Gastrocnemius medialis (tissue), 4 donors: ENCODE measurements at regions of chr3 and their contacts with region 1.

Region 1: DNA sequence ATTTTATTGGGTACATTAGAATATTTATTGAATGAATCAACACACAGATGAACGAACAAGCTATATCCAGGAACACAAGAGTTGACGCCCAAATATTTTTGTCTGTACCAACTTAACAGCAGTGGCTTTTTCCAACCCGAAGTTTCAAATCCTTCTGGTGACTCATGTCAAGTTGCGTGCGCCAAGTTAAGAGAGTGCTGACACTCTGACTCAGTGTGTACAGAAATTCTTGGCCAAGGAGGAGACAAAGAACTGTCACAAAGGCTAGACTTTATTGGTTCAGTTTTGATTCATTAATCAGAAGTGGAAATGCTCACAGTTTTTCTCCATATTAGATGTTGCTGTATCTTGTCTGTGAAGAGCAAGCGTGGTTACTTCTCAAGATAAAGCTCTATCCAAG is 59.6 kb upstream of the TSC22D2 start:
- DNase-seq: no peak
- ATAC-seq: peak; percentile 99 to 100
- H3K4me3 ChIP-seq: no peak overlapping the region
- H3K27ac ChIP-seq: peak overlapping the region in 3 of 4 donors; percentile 20 to 70 (median 44)
- H3K4me1 ChIP-seq: peaks cover 15 to 22% of the 10 kb centered on the region in 2 donors
- H3K27me3 ChIP-seq: peaks cover 0 to 4% (median 0%) of the 10 kb centered on the region in 3 donors
- CTCF ChIP-seq: no peak
- POLR2A ChIP-seq: no peak

Region 2: GRCh38 chr3:150227839-150228238 is 120.7 kb before region 1 on chr3:
- in situ Hi-C with region 1: no loop called
- intact Hi-C with region 1: no loop called
- DNase-seq: no peak
- ATAC-seq: peak in 1 of 2 donors; percentile 69
- H3K4me3 ChIP-seq: no peak overlapping the region
- H3K27ac ChIP-seq: no peak overlapping the region
- H3K4me1 ChIP-seq: peaks cover 0 to 4% of the 10 kb centered on the region in 2 donors
- H3K27me3 ChIP-seq: no peaks in the 10 kb centered on the region
- CTCF ChIP-seq: peak; percentile 49 to 72 (median 61)
- POLR2A ChIP-seq: no peak

Region 3: GRCh38 chr3:150238998-150239619 is 109.4 kb before region 1 on chr3:
- in situ Hi-C with region 1: no loop called
- intact Hi-C with region 1: loop called (anchors 5 kb)
- DNase-seq: no peak
- ATAC-seq: no peak
- H3K4me3 ChIP-seq: no peak overlapping the region
- H3K27ac ChIP-seq: no peak overlapping the region
- H3K4me1 ChIP-seq: peaks cover 12 to 32% of the 10 kb centered on the region in 2 donors
- H3K27me3 ChIP-seq: no peaks in the 10 kb centered on the region
- CTCF ChIP-seq: no peak
- POLR2A ChIP-seq: no peak

Region 4: GRCh38 chr3:150253622-150254021 is 94.9 kb before region 1 on chr3:
- in situ Hi-C with region 1: no loop called
- intact Hi-C with region 1: loop called (anchors 5 kb)
- DNase-seq: peak; percentile 24 to 66
- ATAC-seq: peak; percentile 45 to 46
- H3K4me3 ChIP-seq: no peak overlapping the region
- H3K27ac ChIP-seq: peak overlapping the region in 3 of 4 donors; percentile 78 to 89 (median 87)
- H3K4me1 ChIP-seq: peaks cover 21 to 52% of the 10 kb centered on the region in 2 donors
- H3K27me3 ChIP-seq: no peaks in the 10 kb centered on the region
- CTCF ChIP-seq: no peak
- POLR2A ChIP-seq: no peak

Region 5: GRCh38 chr3:150286390-150287147 is 61.9 kb before region 1 on chr3:
- in situ Hi-C with region 1: no loop called
- intact Hi-C with region 1: loop called (anchors 10 kb)
- DNase-seq: no peak
- ATAC-seq: peak; percentile 80 to 87
- H3K4me3 ChIP-seq: no peak overlapping the region
- H3K27ac ChIP-seq: no peak overlapping the region
- H3K4me1 ChIP-seq: no peaks in the 10 kb centered on the region
- H3K27me3 ChIP-seq: no peaks in the 10 kb centered on the region
- CTCF ChIP-seq: peak; percentile 25 to 62 (median 48)
- POLR2A ChIP-seq: no peak